ENCODE measurements at regions of chr10 and their contacts with region 1.

Region 1: DNA sequence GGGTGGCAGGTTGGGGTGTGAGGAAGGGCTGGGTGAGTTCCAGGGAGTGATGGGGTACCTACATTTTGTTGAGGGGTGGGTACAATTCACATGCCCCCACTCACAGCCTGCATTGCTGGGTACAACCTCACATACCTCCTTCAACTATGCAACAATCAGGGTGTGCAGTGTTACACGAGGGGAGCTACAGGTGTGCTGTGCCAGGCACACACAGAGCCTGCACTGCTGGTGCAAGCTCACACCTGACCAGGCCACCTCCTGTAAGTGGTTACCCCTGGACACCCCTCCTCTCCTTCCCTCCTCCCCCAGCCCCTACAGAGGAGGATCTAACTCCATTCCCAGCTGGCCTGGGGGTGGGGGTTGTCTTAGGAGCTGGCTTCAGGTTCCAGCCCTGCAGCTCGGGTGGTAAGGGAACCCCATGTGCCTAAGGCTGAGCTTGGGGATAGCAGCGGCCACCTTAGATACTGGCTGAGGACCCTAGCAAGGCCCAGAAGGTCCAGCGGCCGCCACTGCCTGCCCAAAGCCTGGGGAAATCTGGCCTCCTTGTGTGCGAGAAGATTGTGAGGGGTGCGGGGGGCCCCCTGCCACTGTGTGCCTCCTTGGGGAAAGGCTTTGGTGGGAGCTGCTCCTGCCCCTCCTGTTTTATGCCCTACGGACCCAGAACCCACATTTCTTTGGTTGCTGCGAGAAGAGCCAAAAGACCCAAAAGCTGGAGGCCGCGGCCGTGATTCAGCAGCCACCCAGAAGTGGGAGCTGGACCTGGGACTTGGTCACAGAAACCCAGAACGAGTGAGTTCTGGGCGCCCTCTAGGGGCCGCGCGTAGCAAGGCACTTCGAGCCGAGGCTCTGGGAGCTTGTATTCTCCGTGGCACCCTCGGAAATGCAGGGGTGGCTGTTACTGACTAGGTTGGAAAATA is 10.8 kb downstream of the TLX1 start:
- DNase-seq: peak; percentile 66
- H3K4me3 Mint-ChIP-seq: no peak overlapping the region
- H3K27ac Mint-ChIP-seq: no peak overlapping the region
- H3K4me1 Mint-ChIP-seq: peaks cover 11% of the 10 kb centered on the region
- H3K27me3 Mint-ChIP-seq: peaks cover 87% of the 10 kb centered on the region

Region 2: DNA sequence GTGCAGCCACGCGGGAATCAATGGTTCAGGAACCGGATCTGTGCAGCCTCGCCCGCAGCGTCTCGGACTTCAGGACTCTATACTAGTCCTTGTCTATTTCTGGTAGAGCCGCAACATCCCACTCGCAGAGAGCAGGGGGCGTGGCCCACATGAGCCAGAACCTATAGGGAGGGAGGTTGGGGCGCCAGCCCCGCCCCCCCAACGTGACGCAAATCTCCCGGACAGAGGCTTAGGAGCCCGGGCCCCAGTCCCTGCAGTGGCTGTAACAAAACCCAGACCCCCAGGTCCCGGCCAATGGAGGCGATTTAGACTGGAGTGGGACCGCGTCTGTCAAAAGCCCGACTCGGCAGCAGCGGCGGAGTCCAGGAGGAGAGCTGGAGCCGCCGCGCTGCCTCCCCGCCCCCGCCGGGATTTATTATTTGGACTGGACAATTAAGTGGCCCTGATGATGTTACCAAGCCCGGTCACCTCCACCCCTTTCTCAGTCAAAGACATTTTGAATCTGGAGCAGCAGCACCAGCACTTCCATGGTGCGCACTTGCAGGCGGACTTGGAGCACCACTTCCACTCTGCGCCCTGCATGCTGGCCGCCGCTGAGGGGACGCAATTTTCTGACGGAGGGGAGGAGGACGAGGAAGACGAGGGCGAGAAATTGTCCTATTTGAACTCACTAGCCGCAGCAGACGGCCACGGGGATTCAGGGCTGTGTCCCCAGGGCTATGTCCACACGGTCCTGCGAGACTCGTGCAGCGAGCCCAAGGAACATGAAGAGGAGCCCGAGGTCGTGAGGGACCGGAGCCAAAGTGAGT is 1609.0 kb before region 1 on chr10 and contains the start of gene NKX2-3:
- intact Hi-C with region 1: loop called (anchors 5 kb)
- DNase-seq: peak; percentile 6
- H3K4me3 Mint-ChIP-seq: peak within 1 kb of the TSS; percentile 22
- H3K27ac Mint-ChIP-seq: peak within 1 kb of the TSS; percentile 73
- H3K4me1 Mint-ChIP-seq: peaks cover 47% of the 10 kb centered on the region
- H3K27me3 Mint-ChIP-seq: peaks cover 87% of the 10 kb centered on the region
- total RNA-seq, gene NKX2-3: not detected in 2 replicates

Region 3: DNA sequence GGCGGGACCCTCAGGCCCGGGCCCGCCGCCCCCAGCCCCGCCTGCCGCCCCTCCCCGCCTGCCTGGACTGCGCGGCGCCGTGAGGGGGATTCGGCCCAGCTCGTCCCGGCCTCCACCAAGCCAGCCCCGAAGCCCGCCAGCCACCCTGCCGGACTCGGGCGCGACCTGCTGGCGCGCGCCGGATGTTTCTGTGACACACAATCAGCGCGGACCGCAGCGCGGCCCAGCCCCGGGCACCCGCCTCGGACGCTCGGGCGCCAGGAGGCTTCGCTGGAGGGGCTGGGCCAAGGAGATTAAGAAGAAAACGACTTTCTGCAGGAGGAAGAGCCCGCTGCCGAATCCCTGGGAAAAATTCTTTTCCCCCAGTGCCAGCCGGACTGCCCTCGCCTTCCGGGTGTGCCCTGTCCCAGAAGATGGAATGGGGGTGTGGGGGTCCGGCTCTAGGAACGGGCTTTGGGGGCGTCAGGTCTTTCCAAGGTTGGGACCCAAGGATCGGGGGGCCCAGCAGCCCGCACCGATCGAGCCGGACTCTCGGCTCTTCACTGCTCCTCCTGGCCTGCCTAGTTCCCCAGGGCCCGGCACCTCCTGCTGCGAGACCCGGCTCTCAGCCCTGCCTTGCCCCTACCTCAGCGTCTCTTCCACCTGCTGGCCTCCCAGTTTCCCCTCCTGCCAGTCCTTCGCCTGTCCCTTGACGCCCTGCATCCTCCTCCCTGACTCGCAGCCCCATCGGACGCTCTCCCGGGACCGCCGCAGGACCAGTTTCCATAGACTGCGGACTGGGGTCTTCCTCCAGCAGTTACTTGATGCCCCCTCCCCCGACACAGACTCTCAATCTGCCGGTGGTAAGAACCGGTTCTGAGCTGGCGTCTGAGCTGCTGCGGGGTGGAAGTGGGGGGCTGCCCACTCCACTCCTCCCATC is 313.8 kb before region 1 on chr10:
- intact Hi-C with region 1: loop called (anchors 5 kb)
- DNase-seq: peak; percentile 19
- H3K4me3 Mint-ChIP-seq: peak overlapping the region; percentile 70
- H3K27ac Mint-ChIP-seq: no peak overlapping the region
- H3K4me1 Mint-ChIP-seq: peaks cover 11% of the 10 kb centered on the region
- H3K27me3 Mint-ChIP-seq: peaks cover 83% of the 10 kb centered on the region

Region 4: GRCh38 chr10:101042667-101043355 is 99.1 kb before region 1 on chr10:
- intact Hi-C with region 1: loop called (anchors 1 kb)
- DNase-seq: peak; percentile 85
- H3K4me3 Mint-ChIP-seq: peak overlapping the region; percentile 91
- H3K27ac Mint-ChIP-seq: peak overlapping the region; percentile 84
- H3K4me1 Mint-ChIP-seq: peaks cover 27% of the 10 kb centered on the region
- H3K27me3 Mint-ChIP-seq: peaks cover 20% of the 10 kb centered on the region

Region 5: DNA sequence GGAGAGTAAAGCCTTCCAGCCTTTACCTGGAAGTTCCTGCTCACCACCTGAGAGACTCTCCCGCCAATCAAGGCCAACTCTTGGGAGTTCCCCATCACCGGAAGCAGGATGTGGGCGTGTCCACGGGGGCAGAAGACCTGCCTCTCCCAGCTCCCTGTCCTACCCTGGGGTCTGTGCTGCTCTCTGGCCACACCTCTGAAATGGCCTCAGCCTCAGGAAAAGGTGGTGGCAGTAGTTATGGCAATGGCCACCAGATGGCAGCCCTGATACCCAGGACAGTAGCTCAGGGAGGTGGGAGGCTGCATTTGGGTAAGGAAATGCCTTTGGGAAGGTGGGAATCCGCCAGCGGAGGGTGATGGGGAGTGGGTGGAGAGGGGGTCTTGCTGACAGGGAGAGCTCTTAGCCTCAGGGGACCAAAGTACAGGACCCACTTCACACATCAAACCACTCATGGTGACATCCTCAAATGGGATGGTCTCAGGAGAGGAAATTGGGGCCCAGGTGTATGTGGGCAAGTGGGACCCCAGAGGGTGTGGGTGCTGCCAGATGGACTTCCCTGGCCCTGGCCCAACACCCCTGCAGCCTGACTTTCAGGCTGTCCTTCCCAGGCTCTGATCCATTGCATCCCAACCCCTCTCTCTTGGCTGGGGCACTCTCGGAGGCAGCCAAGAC is 46.2 kb before region 1 on chr10:
- intact Hi-C with region 1: loop called (anchors 1 kb)
- DNase-seq: peak; percentile 69
- H3K4me3 Mint-ChIP-seq: no peak overlapping the region
- H3K27ac Mint-ChIP-seq: no peak overlapping the region
- H3K4me1 Mint-ChIP-seq: peaks cover 6% of the 10 kb centered on the region
- H3K27me3 Mint-ChIP-seq: peaks cover 21% of the 10 kb centered on the region

Region 6: GRCh38 chr10:101161494-101162299 is 19.8 kb after region 1 on chr10:
- intact Hi-C with region 1: no loop called
- DNase-seq: peak; percentile 44
- H3K4me3 Mint-ChIP-seq: no peak overlapping the region
- H3K27ac Mint-ChIP-seq: peak overlapping the region; percentile 30
- H3K4me1 Mint-ChIP-seq: peaks cover 11% of the 10 kb centered on the region
- H3K27me3 Mint-ChIP-seq: peaks cover 63% of the 10 kb centered on the region

Region 7: DNA sequence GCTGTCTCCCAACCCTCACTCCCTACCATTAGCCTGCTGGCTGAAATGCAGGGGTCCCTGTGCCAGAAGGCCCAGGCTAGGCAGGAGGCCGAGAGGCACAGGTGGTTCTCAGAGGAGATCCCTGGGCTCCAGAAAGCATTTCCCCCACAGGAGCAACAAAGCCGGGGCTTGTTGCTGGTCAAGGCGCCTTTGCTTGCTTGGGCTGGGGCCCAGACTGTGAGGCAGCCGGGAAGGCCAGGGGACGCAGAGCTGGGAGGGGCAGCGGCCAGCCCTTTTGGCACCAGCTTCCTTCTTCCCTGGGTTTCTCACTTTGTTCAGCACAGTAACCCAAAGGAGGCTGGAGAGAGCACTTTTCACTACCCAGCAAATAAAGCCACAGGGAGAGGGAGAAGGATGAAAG is 504.5 kb after region 1 on chr10:
- intact Hi-C with region 1: no loop called
- DNase-seq: no peak
- H3K4me3 Mint-ChIP-seq: no peak overlapping the region
- H3K27ac Mint-ChIP-seq: no peak overlapping the region
- H3K4me1 Mint-ChIP-seq: peaks cover 5% of the 10 kb centered on the region
- H3K27me3 Mint-ChIP-seq: no peaks in the 10 kb centered on the region